Activated T-helper 1 cell treated with anti-CD3 and anti-CD28 coated beads, Interleukin-12 subunit alpha, Interleukin-12 subunit beta, Interleukin-2, Interleukin-4 antibody, amounts not matched to agents 30 ng/mL and 10 ng/mL and 1 ng/mL, durations not matched to agents 14 hours and 24 hours and 36 hours (primary cell): ENCODE measurements at regions of chr6 and their contacts with region 1.

Region 1: GRCh38 chr6:188821-189655 is 103.2 kb upstream of the DUSP22 start:
- DNase-seq: peak; percentile 77
- H3K4me3 Mint-ChIP-seq: peak overlapping the region; percentile 48
- H3K27ac Mint-ChIP-seq: peak overlapping the region; percentile 76
- H3K4me1 Mint-ChIP-seq: peaks cover 52% of the 10 kb centered on the region
- H3K27me3 Mint-ChIP-seq: peaks cover 3% of the 10 kb centered on the region

Region 2: GRCh38 chr6:225121-225721 is 36.2 kb after region 1 on chr6:
- intact Hi-C with region 1: loop called (anchors 1 kb)
- DNase-seq: peak; percentile 63
- H3K4me3 Mint-ChIP-seq: peak overlapping the region; percentile 65
- H3K27ac Mint-ChIP-seq: peak overlapping the region; percentile 96
- H3K4me1 Mint-ChIP-seq: peaks cover 89% of the 10 kb centered on the region
- H3K27me3 Mint-ChIP-seq: no peaks in the 10 kb centered on the region

Region 3: DNA sequence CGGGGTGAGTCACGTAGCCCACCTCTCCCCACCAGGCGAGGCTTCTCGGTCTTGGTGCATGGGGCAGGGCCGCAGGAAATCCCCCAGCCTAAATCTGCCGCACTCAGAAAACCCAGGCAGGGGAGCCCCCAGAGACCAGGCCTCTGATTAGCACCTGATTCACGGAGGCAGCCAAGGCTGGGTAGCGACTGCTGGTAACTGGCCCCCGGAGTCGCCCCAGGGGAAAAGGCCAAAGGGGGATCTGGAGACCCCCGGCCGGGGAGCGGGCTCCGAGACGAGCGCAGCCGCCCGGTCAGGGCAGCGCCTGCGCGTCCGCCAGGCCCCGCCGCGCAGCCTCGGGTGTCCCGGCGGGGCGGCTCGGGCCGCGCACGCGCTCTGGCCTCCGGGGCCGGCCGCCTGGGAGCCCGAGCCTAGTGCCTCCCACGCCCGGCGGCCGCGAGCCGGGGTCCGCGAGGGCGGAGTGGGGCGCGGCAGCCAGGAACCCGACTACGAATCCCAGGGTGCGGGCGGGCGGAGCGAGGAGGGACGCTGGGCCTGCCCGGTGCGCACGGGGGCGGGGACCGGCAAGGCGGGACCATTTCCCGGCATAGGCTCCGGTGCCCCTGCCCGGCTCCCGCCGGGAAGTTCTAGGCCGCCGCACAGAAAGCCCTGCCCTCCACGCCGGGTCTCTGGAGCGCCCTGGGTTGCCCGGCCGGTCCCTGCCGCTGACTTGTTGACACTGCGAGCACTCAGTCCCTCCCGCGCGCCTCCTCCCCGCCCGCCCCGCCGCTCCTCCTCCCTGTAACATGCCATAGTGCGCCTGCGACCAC is 102.9 kb after region 1 on chr6 and contains the start of gene DUSP22:
- intact Hi-C with region 1: loop called (anchors 1 kb)
- DNase-seq: peak; percentile 79
- H3K4me3 Mint-ChIP-seq: peak within 1 kb of the TSS; percentile 94
- H3K27ac Mint-ChIP-seq: peak within 1 kb of the TSS; percentile 99
- H3K4me1 Mint-ChIP-seq: peaks cover 39% of the 10 kb centered on the region
- H3K27me3 Mint-ChIP-seq: no peaks in the 10 kb centered on the region
- total RNA-seq, gene DUSP22: 22.0 and 22.1 TPM in 2 replicates

Region 4: DNA sequence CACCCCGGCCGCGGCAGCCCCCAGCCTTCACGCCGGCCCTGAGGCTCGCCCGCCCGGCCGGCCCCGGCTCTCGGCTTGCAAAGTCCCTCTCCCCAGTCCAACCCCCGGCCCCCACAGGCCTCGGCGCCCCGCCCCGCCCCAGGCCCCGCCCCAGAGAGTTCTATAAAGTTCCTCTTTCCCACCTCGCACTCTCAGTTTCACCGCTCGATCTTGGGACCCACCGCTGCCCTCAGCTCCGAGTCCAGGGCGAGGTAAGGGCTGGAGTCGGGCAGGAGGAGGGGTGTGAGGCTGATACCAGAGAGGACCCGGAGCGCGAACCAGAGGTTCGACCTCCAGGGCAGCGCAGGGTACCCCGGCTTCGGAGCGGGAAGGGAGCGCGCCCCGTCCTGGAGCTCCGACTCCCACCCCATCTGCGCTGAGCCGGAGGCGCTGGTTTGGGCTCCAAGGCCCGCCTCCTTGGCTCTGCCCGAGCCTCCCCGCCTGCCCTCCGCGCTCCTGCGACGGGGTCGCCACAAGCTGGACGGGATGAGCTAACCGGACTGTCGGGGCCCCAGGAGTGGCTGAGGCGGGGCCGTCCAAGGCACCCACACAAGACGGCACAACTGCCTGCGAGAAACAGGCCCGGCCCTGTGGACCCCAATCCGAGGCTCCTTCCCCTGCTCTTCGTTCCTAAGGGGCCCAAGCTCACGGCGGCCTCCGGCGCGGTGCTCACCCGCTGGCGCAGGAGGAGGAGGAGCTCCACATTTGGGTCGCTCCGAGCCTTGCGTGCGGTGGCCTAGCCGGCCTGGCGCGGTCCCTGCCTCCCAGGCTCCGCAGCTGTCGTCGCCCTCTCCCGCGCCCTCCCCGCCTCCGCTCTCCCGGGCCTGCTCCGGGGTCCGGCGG is 202.8 kb after region 1 on chr6 and contains the start of gene IRF4:
- intact Hi-C with region 1: loop called (anchors 1 kb)
- DNase-seq: peak; percentile 69
- H3K4me3 Mint-ChIP-seq: peak within 1 kb of the TSS; percentile 98
- H3K27ac Mint-ChIP-seq: peak within 1 kb of the TSS; percentile 98
- H3K4me1 Mint-ChIP-seq: peaks cover 41% of the 10 kb centered on the region
- H3K27me3 Mint-ChIP-seq: peaks cover 3% of the 10 kb centered on the region
- total RNA-seq, gene IRF4: 911 and 929 TPM in 2 replicates

Region 5: DNA sequence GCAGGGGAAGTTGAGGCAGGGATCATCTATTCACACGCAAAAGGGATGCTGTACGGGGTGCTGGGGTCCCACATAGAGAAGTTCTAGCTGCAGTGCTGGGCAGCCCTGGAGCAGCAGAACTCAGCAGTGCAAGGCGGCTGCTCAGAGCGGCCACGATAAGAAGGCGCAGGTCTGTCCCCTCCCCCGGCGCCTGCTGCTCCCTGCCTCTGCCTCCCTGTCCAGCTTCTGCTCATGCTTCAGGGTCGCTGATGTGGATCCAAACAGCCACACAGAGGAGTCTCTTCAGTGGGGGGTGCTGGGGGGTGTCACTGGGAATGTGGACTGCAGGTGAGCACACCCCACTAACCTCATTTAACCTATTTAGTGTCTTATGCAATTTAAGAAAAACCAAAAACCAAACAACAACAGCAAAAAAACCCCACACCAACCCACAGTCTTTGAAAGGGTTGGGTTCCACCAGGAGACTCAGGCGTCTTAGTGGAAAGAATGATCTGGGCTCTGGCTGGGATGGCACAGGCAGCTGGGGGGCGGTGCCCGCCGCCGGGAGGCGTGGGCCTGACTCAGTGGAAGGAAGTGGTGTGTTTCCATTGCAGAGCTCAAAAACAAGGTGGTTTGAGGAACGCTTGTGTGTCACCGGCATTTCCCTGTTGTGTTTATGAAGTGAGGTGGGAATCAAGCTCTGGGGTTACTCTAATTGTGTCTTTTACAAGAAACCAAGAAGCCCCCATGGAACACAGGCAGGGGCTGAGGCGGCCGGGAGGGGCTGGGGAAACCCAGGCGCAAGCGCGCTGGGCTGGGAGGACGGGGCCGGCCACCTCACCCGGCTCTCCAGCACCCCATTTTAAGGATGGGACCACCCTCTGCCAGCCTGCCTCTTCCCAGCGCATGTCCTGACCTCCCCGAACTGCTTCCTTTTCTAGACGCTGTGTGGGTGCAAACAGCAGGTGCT is 257.7 kb after region 1 on chr6:
- intact Hi-C with region 1: loop called (anchors 1 kb)
- DNase-seq: peak; percentile 92
- H3K4me3 Mint-ChIP-seq: peak overlapping the region; percentile 63
- H3K27ac Mint-ChIP-seq: peak overlapping the region; percentile 98
- H3K4me1 Mint-ChIP-seq: peaks cover 59% of the 10 kb centered on the region
- H3K27me3 Mint-ChIP-seq: peaks cover 2% of the 10 kb centered on the region

Region 6: DNA sequence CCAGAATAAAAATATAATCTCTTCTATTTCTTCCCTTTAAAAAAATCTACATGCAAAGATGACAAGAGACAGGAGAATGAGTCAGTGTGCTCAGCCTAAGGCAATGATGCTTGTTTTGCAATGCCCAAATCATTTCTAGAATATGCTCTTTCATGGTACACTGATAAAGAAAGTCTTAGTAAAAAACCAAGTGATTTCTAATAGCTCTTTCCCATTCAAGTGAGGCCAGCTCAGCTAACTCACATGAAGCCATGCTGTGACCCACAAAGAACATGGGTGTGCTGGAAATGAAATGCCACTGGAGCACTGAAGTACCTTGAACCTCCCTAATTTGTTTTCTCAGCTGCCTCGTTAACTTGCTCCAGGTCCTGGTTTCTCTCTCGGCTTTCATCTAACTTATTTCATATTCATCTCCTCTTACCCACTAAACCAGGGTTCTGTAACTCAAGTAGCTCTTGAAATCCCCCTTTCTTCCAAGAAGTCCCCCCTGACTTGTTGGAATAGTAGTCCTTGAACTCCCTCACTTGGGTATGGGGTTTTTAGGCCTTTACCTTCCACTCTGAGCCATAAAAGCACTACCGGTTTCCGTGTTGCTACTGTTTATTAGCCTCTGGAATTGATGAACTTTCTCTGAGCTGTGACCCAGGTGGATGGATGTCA is 295.2 kb after region 1 on chr6:
- intact Hi-C with region 1: no loop called
- DNase-seq: no peak
- H3K4me3 Mint-ChIP-seq: peak overlapping the region; percentile 38
- H3K27ac Mint-ChIP-seq: peak overlapping the region; percentile 85
- H3K4me1 Mint-ChIP-seq: peaks cover 65% of the 10 kb centered on the region
- H3K27me3 Mint-ChIP-seq: no peaks in the 10 kb centered on the region

Region 7: DNA sequence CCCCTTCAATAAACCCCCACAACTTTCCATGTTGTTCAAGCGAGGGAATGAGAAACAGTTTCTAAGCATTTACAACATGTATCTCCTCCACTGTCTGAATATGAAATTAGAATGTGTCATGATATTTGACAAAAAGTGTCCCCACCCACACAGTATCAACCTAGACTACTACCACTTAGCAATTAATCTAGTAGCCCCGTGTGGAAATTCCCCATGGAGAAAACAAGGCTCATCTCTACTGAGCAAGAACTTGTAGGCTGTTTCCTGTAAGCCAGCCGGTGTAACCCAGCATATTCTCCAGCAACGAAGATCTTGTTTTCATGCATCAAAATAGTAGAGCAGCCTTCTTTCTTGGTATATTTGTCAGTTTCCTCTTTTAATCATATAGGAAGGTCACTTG is 317.5 kb after region 1 on chr6:
- intact Hi-C with region 1: loop called (anchors 2 kb)
- DNase-seq: no peak
- H3K4me3 Mint-ChIP-seq: peak overlapping the region; percentile 64
- H3K27ac Mint-ChIP-seq: peak overlapping the region; percentile 96
- H3K4me1 Mint-ChIP-seq: peaks cover 100% of the 10 kb centered on the region
- H3K27me3 Mint-ChIP-seq: no peaks in the 10 kb centered on the region

Region 8: DNA sequence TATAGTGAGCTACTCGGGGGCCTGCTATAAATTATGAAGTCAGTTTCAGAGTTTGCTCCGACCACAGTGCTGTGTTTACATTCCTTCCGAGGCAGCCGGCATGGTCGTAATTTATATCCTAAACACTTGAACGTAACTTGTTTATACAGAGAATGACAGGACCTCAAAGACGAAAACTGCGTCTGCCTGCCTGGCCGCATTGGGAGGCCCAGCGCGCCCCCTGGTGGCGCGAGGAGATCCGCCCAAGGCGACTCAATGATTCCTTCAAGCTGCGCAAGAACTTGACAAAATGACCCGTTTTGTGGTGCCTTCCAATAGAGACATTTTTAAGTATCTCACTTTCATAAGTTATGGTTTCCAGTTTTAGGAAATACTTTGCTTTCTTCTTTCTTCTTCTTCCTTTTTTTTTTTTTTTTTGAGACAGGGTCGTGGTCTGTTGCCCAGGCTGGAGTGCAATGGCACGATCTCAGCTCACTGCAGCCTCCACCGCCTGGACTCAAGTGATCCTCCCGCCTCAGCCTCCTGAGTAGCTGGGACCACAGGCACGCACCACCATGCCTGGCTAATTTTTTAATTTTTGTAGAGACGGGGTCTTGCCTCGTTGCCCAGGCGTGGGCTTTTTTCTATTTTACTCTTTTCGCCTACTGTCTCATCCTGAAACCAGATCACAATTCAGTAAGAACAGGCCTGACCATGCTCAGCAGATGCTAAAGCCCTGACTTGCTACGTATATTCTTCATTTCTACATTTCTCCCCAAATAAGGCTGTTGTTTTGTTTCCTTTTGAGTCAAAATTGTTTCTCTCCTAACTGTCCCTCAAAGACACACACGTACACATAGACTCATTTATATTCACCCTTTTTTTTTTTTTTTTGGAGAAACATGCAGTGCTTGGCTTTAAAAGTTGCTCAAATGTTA is 1208.2 kb after region 1 on chr6:
- intact Hi-C with region 1: loop called (anchors 2 kb)
- DNase-seq: peak; percentile 42
- H3K4me3 Mint-ChIP-seq: no peak overlapping the region
- H3K27ac Mint-ChIP-seq: no peak overlapping the region
- H3K4me1 Mint-ChIP-seq: peaks cover 5% of the 10 kb centered on the region
- H3K27me3 Mint-ChIP-seq: peaks cover 53% of the 10 kb centered on the region